Activated T-helper 2 cell treated with anti-CD3 and anti-CD28 coated beads, Interferon-gamma antibody, Interleukin-2, Interleukin-4, amounts not matched to agents 10 μg/mL and 5 μg/mL and 100 μg/mL, durations not matched to agents 14 hours and 24 hours and 36 hours (primary cell): ENCODE measurements at regions of chr1 and their contacts with region 1.

Region 1: DNA sequence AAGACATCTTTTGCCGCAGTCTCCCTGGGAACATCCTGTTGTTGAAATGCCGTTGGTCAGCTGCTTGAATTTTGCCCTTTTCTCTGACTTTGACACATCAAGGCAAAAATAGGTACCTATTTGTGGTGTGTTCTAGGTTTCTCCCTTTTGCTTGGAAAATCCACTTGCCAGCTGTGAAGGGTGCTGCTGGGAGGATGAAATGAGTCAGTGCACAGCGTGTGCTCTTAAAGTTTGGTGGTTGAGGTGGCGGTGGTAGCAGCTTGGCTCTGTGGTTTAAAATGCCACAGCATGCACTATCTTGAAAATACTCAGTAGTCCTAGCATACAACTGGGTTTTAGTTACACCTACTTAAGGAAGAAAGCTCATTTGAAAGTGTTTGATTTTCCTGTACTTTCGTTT is 183.8 kb downstream of the DHRS3 start:
- DNase-seq: peak; percentile 57
- H3K4me3 Mint-ChIP-seq: no peak overlapping the region
- H3K27ac Mint-ChIP-seq: peak overlapping the region; percentile 56
- H3K4me1 Mint-ChIP-seq: peaks cover 61% of the 10 kb centered on the region
- H3K27me3 Mint-ChIP-seq: no peaks in the 10 kb centered on the region

Region 2: GRCh38 chr1:12067900-12068821 is 366.0 kb before region 1 on chr1:
- intact Hi-C with region 1: loop called (anchors 10 kb)
- DNase-seq: peak; percentile 44
- H3K4me3 Mint-ChIP-seq: peak overlapping the region; percentile 73
- H3K27ac Mint-ChIP-seq: peak overlapping the region; percentile 94
- H3K4me1 Mint-ChIP-seq: peaks cover 49% of the 10 kb centered on the region
- H3K27me3 Mint-ChIP-seq: no peaks in the 10 kb centered on the region

Region 3: GRCh38 chr1:12344596-12345349 is 89.4 kb before region 1 on chr1:
- intact Hi-C with region 1: loop called (anchors 1 kb)
- DNase-seq: no peak
- H3K4me3 Mint-ChIP-seq: peak overlapping the region; percentile 61
- H3K27ac Mint-ChIP-seq: peak overlapping the region; percentile 88
- H3K4me1 Mint-ChIP-seq: peaks cover 53% of the 10 kb centered on the region
- H3K27me3 Mint-ChIP-seq: no peaks in the 10 kb centered on the region

Region 4: GRCh38 chr1:12407050-12407961 is 26.9 kb before region 1 on chr1:
- intact Hi-C with region 1: loop called (anchors 1 kb)
- DNase-seq: no peak
- H3K4me3 Mint-ChIP-seq: no peak overlapping the region
- H3K27ac Mint-ChIP-seq: no peak overlapping the region
- H3K4me1 Mint-ChIP-seq: peaks cover 22% of the 10 kb centered on the region
- H3K27me3 Mint-ChIP-seq: no peaks in the 10 kb centered on the region

Region 5: GRCh38 chr1:12448746-12449177 is 14.6 kb after region 1 on chr1:
- intact Hi-C with region 1: loop called (anchors 1 kb)
- DNase-seq: no peak
- H3K4me3 Mint-ChIP-seq: peak overlapping the region; percentile 60
- H3K27ac Mint-ChIP-seq: peak overlapping the region; percentile 96
- H3K4me1 Mint-ChIP-seq: peaks cover 72% of the 10 kb centered on the region
- H3K27me3 Mint-ChIP-seq: peaks cover 2% of the 10 kb centered on the region

Region 6: GRCh38 chr1:12511516-12512468 is 77.6 kb after region 1 on chr1:
- intact Hi-C with region 1: loop called (anchors 1 kb)
- DNase-seq: no peak
- H3K4me3 Mint-ChIP-seq: peak overlapping the region; percentile 58
- H3K27ac Mint-ChIP-seq: peak overlapping the region; percentile 99
- H3K4me1 Mint-ChIP-seq: peaks cover 41% of the 10 kb centered on the region
- H3K27me3 Mint-ChIP-seq: no peaks in the 10 kb centered on the region